ENCODE measurements at regions of chr1 and their contacts with region 1.

Region 1: DNA sequence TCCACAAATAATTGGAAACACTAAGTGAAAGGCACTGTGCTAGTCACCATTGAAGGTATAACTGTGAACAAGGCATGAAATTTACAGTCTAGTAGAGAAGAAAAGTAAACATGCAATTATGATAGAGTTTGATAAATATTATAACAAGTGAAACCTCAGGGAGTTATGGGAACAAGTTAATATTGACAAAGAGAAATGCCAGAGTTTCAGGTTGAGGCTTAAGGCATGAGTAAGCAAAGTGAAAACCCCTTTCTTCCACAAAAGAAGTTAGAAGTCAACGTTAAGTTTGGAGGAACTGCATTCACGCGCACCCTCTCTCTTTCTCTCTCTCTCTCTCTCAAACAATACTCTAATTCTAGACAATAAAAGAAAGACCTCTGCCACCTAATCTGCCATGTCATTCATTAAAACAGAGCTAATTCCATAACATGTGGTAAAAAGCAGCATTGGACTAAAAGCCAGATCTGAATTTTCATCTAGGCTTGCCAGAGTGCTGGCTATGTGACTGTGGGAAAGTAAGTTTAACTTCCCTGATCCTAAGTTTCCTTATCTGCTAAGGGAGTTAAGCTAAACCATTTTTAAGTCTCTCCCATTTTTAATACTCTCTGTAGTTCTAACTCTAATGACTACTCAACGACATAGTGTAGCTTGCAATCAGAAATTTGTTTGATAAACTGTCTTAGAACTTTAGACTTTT is 22.0 kb downstream of the SLC44A5 start:
- DNase-seq: no peak
- H3K4me3 ChIP-seq: no peak overlapping the region
- H3K4me3 Mint-ChIP-seq: peak overlapping the region; percentile 34
- H3K27ac Mint-ChIP-seq: peak overlapping the region; percentile 83
- H3K4me1 ChIP-seq: peaks cover 11% of the 10 kb centered on the region
- H3K4me1 Mint-ChIP-seq: peaks cover 9% of the 10 kb centered on the region
- H3K27me3 ChIP-seq: no peaks in the 10 kb centered on the region
- H3K27me3 Mint-ChIP-seq: no peaks in the 10 kb centered on the region
- CTCF ChIP-seq: no peak

Region 2: GRCh38 chr1:75632350-75632949 is 43.5 kb after region 1 on chr1:
- CTCF ChIA-PET with region 1: no interaction called
- POLR2A ChIA-PET with region 1: no interaction called
- intact Hi-C with region 1: loop called (anchors 1 kb)
- DNase-seq: peak in 1 of 2 experiments; percentile 43
- H3K4me3 ChIP-seq: no peak overlapping the region
- H3K4me3 Mint-ChIP-seq: no peak overlapping the region
- H3K27ac Mint-ChIP-seq: no peak overlapping the region
- H3K4me1 ChIP-seq: no peaks in the 10 kb centered on the region
- H3K4me1 Mint-ChIP-seq: peaks cover 7% of the 10 kb centered on the region
- H3K27me3 ChIP-seq: no peaks in the 10 kb centered on the region
- H3K27me3 Mint-ChIP-seq: no peaks in the 10 kb centered on the region
- CTCF ChIP-seq: peak; percentile 50 to 62

Region 3: DNA sequence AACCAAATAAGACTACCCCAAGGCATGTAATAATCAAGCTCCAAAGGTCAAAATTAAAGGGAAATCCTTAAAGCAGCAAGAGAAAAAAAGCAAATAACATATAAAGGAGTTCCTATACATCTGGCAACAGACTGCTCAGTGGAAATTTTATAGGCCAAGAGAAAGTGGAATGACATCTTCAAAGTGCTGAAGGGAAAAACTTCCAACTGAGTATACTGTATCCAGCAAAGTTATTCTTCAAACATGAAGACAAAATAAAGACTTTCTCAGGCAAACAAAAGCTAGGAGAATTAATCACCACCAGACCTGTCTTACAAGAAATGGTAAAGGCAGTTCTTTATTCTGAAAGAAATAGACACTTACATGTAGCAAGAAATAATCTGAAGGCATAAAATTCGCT is 67.0 kb after region 1 on chr1:
- CTCF ChIA-PET with region 1: no interaction called
- POLR2A ChIA-PET with region 1: no interaction called
- intact Hi-C with region 1: no loop called
- DNase-seq: no peak
- H3K4me3 ChIP-seq: no peak overlapping the region
- H3K4me3 Mint-ChIP-seq: no peak overlapping the region
- H3K27ac Mint-ChIP-seq: no peak overlapping the region
- H3K4me1 ChIP-seq: no peaks in the 10 kb centered on the region
- H3K4me1 Mint-ChIP-seq: no peaks in the 10 kb centered on the region
- H3K27me3 ChIP-seq: no peaks in the 10 kb centered on the region
- H3K27me3 Mint-ChIP-seq: peaks cover 3% of the 10 kb centered on the region
- CTCF ChIP-seq: no peak